Mammary epithelial cell (primary cell): ENCODE measurements at regions of chr2 and their contacts with region 1.

Region 1: GRCh38 chr2:227106845-227107759 is 56.9 kb downstream of the COL4A4 start:
- DNase-seq: peak; percentile 30
- H3K4me3 ChIP-seq: no peak overlapping the region
- H3K27ac ChIP-seq: no peak overlapping the region
- H3K4me1 ChIP-seq: no peaks in the 10 kb centered on the region
- H3K27me3 ChIP-seq: peaks cover 1% of the 10 kb centered on the region
- CTCF ChIP-seq: peak; percentile 73 to 85

Region 2: DNA sequence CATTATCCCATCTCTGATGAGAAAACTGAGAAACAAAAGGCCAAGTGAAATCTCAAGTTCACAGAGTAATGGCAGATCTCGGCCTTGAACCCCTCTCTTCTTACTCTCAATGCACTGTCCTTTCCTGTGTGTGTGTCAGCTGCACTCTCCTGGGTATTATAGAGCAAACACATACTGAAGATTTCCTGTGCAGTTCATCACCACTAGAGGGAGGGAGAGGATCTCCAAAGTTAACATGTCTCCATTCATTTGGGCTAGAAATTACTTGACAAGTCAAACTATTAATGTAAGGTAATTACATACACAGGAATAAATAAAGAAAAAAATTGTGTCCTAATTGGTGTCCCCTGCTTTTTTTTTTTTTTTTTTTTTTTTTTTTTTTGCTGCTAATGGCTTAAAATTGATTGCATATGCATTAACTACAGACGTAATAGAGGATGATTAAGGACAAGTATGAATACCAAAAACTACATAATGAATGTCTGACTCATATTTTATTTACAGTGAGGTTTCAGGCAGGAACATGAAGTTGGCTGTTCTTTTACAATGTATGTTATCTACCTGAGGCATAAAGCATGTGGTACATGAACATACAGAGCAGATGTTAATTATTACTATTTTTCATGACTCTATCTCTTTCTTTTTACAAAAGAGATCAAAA is 1438.4 kb before region 1 on chr2:
- CTCF ChIA-PET with region 1: interaction called, 3 read pairs
- dilution Hi-C with region 1: no loop called
- in situ Hi-C with region 1: loop called (anchors 10 to 25 kb)
- intact Hi-C with region 1: loop called (anchors 1 kb)
- DNase-seq: peak; percentile 71
- H3K4me3 ChIP-seq: no peak overlapping the region
- H3K27ac ChIP-seq: peak overlapping the region; percentile 62
- H3K4me1 ChIP-seq: peaks cover 4% of the 10 kb centered on the region
- H3K27me3 ChIP-seq: no peaks in the 10 kb centered on the region
- CTCF ChIP-seq: peak; percentile 87 to 94

Region 3: DNA sequence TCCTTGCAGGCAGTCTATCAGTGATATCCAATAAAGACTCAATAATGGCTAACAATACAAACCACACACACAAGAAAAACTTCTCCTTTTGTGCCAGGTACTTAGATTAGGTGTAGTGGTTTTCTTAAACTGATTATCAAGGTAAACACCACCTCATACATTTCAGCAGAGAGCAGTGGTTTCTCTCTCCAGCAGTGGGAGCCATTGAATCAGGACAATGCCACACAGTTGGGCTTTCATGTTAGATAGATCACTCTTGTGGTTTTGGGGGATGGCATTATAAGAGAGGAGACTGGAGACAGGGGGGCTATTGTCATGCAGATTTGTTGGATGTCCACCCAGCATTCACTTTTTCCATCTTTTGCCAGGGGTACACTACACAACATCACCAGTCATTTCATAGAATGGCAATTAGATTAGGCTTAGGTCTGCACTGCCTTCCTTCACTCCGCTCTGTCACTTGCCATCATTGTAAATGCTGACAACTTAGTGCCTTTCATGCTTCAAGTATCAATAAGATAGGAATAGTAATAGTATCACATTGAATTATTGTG is 293.9 kb before region 1 on chr2:
- CTCF ChIA-PET with region 1: no interaction called
- dilution Hi-C with region 1: no loop called
- in situ Hi-C with region 1: loop called (anchors 10 to 25 kb)
- intact Hi-C with region 1: loop called (anchors 1 kb)
- DNase-seq: no peak
- H3K4me3 ChIP-seq: no peak overlapping the region
- H3K27ac ChIP-seq: no peak overlapping the region
- H3K4me1 ChIP-seq: no peaks in the 10 kb centered on the region
- H3K27me3 ChIP-seq: no peaks in the 10 kb centered on the region
- CTCF ChIP-seq: peak; percentile 54 to 74

Region 4: DNA sequence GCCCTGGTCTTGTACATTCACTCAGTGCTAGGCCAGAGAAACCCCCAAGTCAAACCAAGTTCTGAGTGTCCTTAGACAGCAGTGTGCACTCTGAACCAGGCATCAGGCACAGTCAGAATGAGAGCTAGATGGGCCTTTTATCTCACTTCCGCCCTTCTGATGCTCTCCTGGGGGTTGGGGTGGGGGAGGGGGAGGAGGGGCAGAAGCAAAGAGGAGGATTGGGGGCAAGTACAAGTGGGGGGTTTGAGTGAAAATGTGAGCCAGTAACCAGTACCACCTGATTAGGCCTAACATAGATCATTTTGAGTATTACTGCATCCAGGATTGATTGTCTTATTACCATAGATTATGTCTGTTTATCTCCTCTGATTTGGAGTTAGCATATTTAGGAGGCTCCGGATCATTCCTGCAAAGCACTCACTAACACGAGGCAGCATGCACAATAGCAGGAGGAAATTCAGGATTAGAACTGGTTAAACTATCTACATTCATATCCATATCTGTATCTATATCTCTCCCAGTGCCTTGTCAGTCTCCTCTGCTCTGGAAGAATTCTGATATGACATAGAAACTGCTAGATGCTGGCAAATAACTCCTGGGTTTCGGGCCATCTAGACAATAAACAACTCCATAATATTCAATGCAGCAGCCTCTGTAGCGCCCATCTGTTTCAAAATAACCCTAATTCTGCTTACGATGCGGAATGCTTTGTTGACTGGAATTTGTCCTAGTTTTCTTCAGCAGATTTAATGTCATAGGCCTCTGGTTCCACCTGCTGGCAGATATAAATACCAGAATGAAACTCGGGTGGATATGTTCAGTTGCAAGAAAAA is 122.1 kb before region 1 on chr2:
- CTCF ChIA-PET with region 1: no interaction called
- dilution Hi-C with region 1: no loop called
- in situ Hi-C with region 1: no loop called
- intact Hi-C with region 1: loop called (anchors 2 kb)
- DNase-seq: peak; percentile 34
- H3K4me3 ChIP-seq: no peak overlapping the region
- H3K27ac ChIP-seq: no peak overlapping the region
- H3K4me1 ChIP-seq: no peaks in the 10 kb centered on the region
- H3K27me3 ChIP-seq: no peaks in the 10 kb centered on the region
- CTCF ChIP-seq: peak; percentile 52 to 65

Region 5: GRCh38 chr2:227033471-227034148 is 73.5 kb before region 1 on chr2:
- CTCF ChIA-PET with region 1: no interaction called
- dilution Hi-C with region 1: no loop called
- in situ Hi-C with region 1: no loop called
- intact Hi-C with region 1: loop called (anchors 1 kb)
- DNase-seq: peak; percentile 12
- H3K4me3 ChIP-seq: no peak overlapping the region
- H3K27ac ChIP-seq: no peak overlapping the region
- H3K4me1 ChIP-seq: no peaks in the 10 kb centered on the region
- H3K27me3 ChIP-seq: no peaks in the 10 kb centered on the region
- CTCF ChIP-seq: peak; percentile 69 to 73